Activated CD4-positive, alpha-beta T cell treated with anti-CD3 and anti-CD28 coated beads for 36 hours (primary cell): ENCODE measurements at regions of chr22 and their contacts with region 1.

Region 1: DNA sequence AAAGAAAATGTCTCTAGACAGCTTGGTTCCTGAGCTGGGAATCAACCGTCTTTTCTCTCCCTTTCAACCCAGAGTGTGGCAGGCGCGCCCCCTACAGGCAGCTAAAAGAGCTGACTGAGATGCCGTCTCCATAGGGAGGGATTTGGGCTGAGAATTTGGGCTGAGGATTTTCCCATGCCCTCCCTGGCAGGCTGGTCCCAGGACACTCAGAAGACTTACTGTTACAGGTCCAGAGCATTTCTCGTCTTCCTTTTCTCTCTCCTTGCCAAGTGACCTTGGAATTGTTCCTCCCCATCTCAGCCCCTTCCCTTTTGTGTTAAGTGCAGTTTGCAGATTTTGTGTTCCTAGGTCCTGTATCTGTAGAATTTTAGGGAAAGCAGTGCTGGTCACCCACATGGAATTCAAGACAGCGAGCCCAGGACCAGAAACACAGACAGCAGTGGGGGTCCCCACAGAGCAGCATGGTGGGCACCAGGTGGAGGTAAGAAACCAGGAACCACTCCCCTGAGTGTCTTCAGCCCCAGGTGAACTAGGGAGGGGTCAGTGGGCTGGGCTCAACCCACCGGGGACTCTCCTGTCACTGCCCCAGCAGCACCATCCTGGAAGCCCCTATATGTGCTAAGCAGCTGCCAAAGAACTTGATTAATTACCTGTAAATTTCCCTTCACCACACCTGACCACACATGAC is 9.9 kb upstream of the IGLL5 start:
- DNase-seq: peak; percentile 86
- ATAC-seq: peak; percentile 54
- H3K4me3 Mint-ChIP-seq: no peak overlapping the region
- H3K27ac Mint-ChIP-seq: no peak overlapping the region
- H3K4me1 Mint-ChIP-seq: no peaks in the 10 kb centered on the region
- H3K27me3 Mint-ChIP-seq: no peaks in the 10 kb centered on the region

Region 2: GRCh38 chr22:22748297-22748743 is 129.3 kb before region 1 on chr22:
- CTCF ChIA-PET with region 1: interaction called, 15 read pairs
- POLR2A ChIA-PET with region 1: no interaction called
- intact Hi-C with region 1: no loop called
- DNase-seq: peak; percentile 60
- ATAC-seq: peak; percentile 79
- H3K4me3 Mint-ChIP-seq: no peak overlapping the region
- H3K27ac Mint-ChIP-seq: no peak overlapping the region
- H3K4me1 Mint-ChIP-seq: peaks cover 6% of the 10 kb centered on the region
- H3K27me3 Mint-ChIP-seq: no peaks in the 10 kb centered on the region

Region 3: DNA sequence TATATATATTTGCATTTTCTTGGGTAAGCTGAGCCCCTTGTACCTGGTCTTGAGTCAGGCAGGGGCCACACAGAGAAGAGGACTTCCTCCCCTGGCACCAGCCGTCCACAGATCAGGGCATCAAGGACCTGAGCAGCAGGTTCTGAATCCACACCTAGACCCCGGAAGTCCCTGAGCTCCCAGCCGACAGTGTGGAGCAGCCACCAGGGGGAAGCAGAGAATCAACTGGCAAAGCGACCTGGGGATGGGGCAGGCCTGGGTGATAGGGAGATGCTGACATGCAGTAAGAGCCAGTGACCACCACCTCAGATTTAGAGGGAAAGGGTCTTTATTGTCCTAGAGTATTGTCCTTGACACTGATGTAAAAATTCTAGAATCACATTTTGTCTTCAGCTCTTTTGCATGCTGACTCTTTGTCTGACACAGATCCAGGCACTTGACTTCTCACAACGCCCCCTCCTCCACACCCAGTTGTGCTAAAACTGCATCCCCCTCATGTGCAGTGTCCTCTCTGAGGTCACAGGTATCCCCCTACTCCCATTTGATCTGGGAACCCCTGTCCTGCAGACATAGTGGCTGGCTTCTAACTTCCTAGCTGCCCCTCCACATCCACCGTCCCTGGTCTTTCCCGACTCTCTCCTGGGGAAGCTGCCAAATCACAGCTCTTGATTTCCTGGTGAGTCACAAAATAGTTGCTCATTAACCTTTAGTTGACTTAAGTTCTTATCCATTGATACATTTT is 124.0 kb before region 1 on chr22:
- CTCF ChIA-PET with region 1: interaction called, 15 read pairs
- POLR2A ChIA-PET with region 1: no interaction called
- intact Hi-C with region 1: no loop called
- DNase-seq: peak; percentile 89
- ATAC-seq: peak; percentile 99
- H3K4me3 Mint-ChIP-seq: no peak overlapping the region
- H3K27ac Mint-ChIP-seq: peak overlapping the region; percentile 58
- H3K4me1 Mint-ChIP-seq: peaks cover 34% of the 10 kb centered on the region
- H3K27me3 Mint-ChIP-seq: no peaks in the 10 kb centered on the region

Region 4: DNA sequence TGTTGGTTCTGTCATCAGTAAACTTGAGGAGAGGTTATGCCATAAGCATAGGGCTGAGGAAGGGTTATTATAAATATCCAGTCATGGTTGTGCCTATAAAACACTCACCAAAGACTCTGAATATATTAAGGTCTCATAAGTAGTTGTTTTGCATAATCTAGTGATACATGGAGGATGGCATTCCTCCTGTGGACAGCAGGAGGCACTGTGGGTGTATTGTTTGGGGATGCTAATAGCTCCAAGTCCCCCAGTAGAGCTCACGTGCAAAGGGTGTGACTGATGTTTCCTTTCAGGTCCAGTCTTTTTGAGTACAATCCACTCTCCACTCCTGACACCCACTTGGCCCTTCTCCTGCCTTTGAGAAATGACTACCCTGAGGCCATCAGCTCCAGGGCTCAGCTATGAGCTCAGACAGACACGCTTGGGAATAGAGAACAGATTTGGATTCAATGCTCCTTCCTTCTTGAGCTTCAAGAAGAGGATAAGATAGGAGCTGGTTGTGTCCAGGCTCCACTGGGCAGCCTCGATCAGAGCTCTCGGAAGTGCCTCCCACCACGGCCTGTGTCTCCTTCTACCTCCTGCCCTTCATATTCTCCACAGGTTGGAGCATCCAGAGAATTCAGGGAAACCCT is 75.2 kb before region 1 on chr22:
- CTCF ChIA-PET with region 1: interaction called, 19 read pairs
- POLR2A ChIA-PET with region 1: no interaction called
- intact Hi-C with region 1: loop called in 1 of 2 experiments (anchors 2 kb)
- DNase-seq: peak; percentile 70
- ATAC-seq: peak; percentile 68
- H3K4me3 Mint-ChIP-seq: no peak overlapping the region
- H3K27ac Mint-ChIP-seq: no peak overlapping the region
- H3K4me1 Mint-ChIP-seq: peaks cover 38% of the 10 kb centered on the region
- H3K27me3 Mint-ChIP-seq: no peaks in the 10 kb centered on the region

Region 5: GRCh38 chr22:22848364-22848866 is 29.3 kb before region 1 on chr22:
- CTCF ChIA-PET with region 1: interaction called, 41 read pairs
- POLR2A ChIA-PET with region 1: no interaction called
- intact Hi-C with region 1: loop called (anchors 1 to 2 kb)
- DNase-seq: peak; percentile 85
- ATAC-seq: peak; percentile 92
- H3K4me3 Mint-ChIP-seq: no peak overlapping the region
- H3K27ac Mint-ChIP-seq: no peak overlapping the region
- H3K4me1 Mint-ChIP-seq: peaks cover 34% of the 10 kb centered on the region
- H3K27me3 Mint-ChIP-seq: no peaks in the 10 kb centered on the region

Region 6: GRCh38 chr22:22865311-22866072 is 12.2 kb before region 1 on chr22:
- CTCF ChIA-PET with region 1: interaction called, 16 read pairs
- POLR2A ChIA-PET with region 1: no interaction called
- intact Hi-C with region 1: no loop called
- DNase-seq: peak; percentile 66
- ATAC-seq: peak; percentile 80
- H3K4me3 Mint-ChIP-seq: no peak overlapping the region
- H3K27ac Mint-ChIP-seq: no peak overlapping the region
- H3K4me1 Mint-ChIP-seq: peaks cover 37% of the 10 kb centered on the region
- H3K27me3 Mint-ChIP-seq: no peaks in the 10 kb centered on the region